Right ventricle myocardium inferior (tissue), 1 donor: ENCODE measurements at regions of chr7 and their contacts with region 1.

Region 1: DNA sequence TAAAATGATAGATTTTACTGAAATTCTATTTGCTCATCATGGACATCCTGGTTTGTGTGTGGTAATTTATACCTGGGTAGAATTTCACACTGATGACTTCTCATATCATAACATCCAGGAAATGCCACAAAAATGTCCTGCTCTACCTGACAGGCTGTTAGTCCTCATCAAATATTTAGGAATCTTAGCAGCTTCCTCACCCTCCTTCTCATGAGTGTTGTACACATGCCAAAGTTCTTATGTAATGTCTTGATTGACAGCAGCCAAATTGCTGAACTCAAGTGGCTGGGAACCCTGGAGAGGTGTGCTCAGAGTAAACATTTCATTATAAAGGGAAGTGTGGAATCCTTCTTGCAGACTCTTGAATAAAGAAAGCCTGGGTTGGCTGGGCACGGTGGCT is 8.9 kb downstream of the EEPD1 start:
- DNase-seq: no peak
- ATAC-seq: no peak

Region 2: GRCh38 chr7:36182854-36183604 is 21.0 kb after region 1 on chr7:
- intact Hi-C with region 1: no loop called
- DNase-seq: no peak
- ATAC-seq: no peak

Region 3: GRCh38 chr7:36202398-36202797 is 40.4 kb after region 1 on chr7:
- intact Hi-C with region 1: loop called (anchors 5 kb)
- DNase-seq: no peak
- ATAC-seq: no peak

Region 4: GRCh38 chr7:36986429-36987362 is 824.7 kb after region 1 on chr7:
- intact Hi-C with region 1: no loop called
- DNase-seq: no peak
- ATAC-seq: peak; percentile 64